ENCODE measurements at regions of chr11 and their contacts with region 1.

Region 1: DNA sequence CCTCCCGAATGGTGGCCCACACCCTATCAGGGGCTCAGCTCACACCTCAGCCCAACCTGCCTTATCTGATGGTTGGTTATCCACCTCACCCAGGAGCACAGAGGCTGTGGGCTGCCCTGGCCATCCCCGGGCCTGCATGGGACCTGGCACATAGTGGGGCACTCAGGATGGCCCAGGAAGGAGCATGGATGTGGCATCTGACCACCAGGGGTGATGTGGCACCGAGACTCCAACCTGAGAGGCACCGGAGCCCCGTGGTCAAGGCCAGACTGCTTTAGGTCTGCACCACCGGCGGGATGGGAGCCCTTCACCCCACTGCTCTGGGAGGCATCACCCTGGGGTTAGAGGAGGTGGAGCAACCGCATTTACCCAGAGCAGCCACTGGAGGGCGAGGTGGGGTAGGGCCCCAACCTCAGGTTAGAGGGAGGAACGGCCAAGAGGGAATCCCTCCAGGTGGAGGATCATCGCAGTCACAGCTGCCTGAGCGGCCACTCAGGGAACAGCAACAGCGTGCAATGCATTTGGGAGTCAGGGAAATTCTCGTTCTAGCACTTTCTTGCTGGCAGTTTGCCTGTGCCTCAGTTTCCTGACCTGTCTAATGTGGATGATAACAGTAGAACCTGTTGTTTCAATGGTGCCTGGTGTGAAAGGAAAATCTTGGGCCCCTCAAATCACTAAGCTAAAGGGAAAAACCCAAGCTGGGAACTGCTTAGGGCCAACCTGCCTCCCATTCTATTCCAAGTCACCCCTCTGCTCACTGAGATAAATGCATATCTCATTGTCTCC is 52.9 kb upstream of the CARS1 start:
- DNase-seq: peak; percentile 80 to 95 (median 92)
- ATAC-seq: peak; percentile 99
- H3K4me3 ChIP-seq: no peak overlapping the region
- H3K27ac ChIP-seq: no peak overlapping the region
- H3K4me1 ChIP-seq: peaks cover 2 to 10% of the 10 kb centered on the region in 2 experiments; a peak in 3 of 5 replicates
- H3K27me3 ChIP-seq: no peaks in the 10 kb centered on the region
- CTCF ChIP-seq: peak; percentile 90 to 97 (median 92)
- EP300 ChIP-seq: no peak
- POLR2A ChIP-seq: no peak
- RAD21 ChIP-seq: peak; percentile 75 to 90

Region 2: DNA sequence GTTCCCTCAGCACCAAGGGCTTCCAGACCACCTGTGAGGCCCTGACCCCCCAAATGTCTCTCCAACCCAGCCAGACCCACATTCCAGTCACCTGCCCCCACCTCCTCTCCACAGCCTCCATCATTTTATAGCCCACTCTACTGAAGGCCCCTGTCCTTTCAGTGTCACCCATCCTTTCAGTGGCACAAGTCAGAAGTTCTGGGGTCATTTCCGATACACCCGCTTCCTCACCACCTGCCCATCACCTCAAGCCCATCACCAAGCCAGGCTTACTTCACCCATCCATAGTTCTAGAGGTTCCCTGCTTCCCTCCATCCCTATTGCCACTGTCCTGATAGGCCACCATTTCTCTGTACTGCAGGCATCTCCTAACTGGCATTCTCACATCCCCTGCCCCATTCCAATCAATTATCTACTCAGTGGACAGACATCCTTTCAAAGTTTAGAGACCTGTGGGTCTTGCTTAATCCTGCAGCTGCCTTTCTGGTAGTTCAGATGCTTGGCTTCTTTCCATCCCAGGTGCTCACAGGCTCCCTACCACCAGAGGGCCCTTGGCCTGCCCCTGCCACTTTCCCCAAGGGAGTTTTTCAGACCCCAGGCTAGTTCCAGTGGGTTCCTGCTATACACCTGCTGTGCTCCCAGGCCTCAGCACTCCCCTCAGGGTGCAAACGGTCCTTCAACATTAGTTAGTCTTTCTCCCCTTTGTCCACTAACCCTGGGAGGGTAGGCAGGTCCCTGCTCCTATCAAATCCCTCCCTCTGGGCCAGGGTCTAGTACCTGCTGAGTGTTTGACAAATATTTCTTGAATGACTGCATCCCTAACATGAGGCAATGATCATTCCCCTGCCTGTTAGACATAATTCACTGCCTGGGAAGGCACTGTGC is 417.9 kb before region 1 on chr11:
- CTCF ChIA-PET with region 1: no interaction called
- POLR2A ChIA-PET with region 1: no interaction called
- in situ Hi-C with region 1: no loop called
- intact Hi-C with region 1: no loop called
- DNase-seq: peak in 1 of 4 experiments; percentile 34
- ATAC-seq: 0 out of 3 replicates have a peak, but pooled peaks have one; percentile 17
- H3K4me3 ChIP-seq: no peak overlapping the region
- H3K27ac ChIP-seq: no peak overlapping the region
- H3K4me1 ChIP-seq: peaks cover 5 to 11% of the 10 kb centered on the region in 2 experiments; a peak in 4 of 5 replicates
- H3K27me3 ChIP-seq: no peaks in the 10 kb centered on the region
- CTCF ChIP-seq: peak; percentile 28 to 47 (median 36); a peak in 4 of 6 replicates
- EP300 ChIP-seq: no peak
- POLR2A ChIP-seq: no peak
- RAD21 ChIP-seq: peak in 1 of 2 experiments; percentile 41; a peak in 2 of 4 replicates

Region 3: DNA sequence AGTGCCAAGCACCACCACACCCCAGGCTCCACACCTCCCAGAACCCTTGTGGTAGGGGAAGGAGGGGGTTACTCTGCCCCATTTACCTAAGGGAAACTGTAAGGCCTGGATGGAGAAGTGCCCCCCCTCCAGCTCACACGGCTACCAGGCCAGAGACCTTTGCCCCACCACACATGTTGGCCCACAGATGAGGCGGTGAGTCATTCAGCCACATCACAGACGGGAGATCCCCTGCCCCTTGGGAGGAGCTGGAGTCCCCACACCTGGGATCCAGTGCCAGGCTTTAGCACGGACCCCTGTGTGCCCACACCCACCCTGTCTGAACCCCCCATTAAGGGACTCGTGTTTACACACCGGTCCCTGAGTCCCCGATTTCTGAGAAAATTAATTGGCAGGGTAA is 249.5 kb before region 1 on chr11:
- CTCF ChIA-PET with region 1: no interaction called
- POLR2A ChIA-PET with region 1: no interaction called
- in situ Hi-C with region 1: no loop called
- intact Hi-C with region 1: no loop called
- DNase-seq: peak in 1 of 4 experiments; percentile 34
- ATAC-seq: no peak
- H3K4me3 ChIP-seq: no peak overlapping the region
- H3K27ac ChIP-seq: no peak overlapping the region
- H3K4me1 ChIP-seq: peaks cover 0 to 33% of the 10 kb centered on the region in 2 experiments; a peak in 2 of 5 replicates
- H3K27me3 ChIP-seq: peaks cover 0 to 26% of the 10 kb centered on the region in 2 experiments; a peak in 3 of 5 replicates
- CTCF ChIP-seq: no peak
- EP300 ChIP-seq: no peak
- POLR2A ChIP-seq: no peak
- RAD21 ChIP-seq: no peak

Region 4: DNA sequence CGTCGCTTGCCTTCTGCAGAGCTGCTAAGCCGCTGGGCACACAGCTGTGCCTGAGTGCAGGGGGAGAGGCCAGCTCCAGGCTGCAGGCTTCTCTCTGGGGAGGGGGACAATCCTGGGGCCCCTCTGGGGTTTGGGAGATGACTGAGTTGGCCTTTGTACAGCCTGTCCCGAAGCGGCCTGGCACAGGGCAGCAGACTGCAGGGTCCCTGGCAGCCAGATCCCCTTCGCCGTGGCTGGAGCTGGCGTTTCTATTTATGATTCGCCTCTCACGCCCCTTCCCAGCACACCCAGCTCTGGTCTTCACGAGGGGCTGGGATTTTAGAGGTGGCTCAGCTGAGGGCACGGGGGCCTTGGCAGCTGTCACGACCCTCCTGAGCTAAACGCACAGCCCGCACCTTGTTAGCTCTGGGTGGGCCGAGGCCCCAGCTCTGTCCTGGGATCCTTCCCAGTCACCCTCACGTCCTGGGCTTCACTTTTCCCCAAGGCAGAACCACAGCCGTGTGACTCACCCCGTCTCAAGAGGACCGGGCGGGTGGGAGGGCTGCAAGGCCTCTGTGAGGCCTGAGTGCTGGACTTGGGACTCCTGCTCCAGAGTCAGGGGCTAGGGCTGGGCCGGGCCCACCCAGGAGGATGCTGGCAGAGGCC is 36.6 kb after region 1 on chr11:
- CTCF ChIA-PET with region 1: no interaction called
- POLR2A ChIA-PET with region 1: no interaction called
- in situ Hi-C with region 1: no loop called
- intact Hi-C with region 1: no loop called
- DNase-seq: no peak
- ATAC-seq: no peak
- H3K4me3 ChIP-seq: no peak overlapping the region
- H3K27ac ChIP-seq: no peak overlapping the region
- H3K4me1 ChIP-seq: peaks cover 7 to 75% of the 10 kb centered on the region in 2 experiments; a peak in 3 of 5 replicates
- H3K27me3 ChIP-seq: no peaks in the 10 kb centered on the region
- CTCF ChIP-seq: no peak
- EP300 ChIP-seq: no peak
- POLR2A ChIP-seq: no peak
- RAD21 ChIP-seq: no peak

Region 5: GRCh38 chr11:3160252-3161031 is 50.3 kb after region 1 on chr11:
- CTCF ChIA-PET with region 1: no interaction called
- POLR2A ChIA-PET with region 1: no interaction called
- in situ Hi-C with region 1: no loop called
- intact Hi-C with region 1: loop called (anchors 10 kb)
- DNase-seq: no peak
- ATAC-seq: no peak
- H3K4me3 ChIP-seq: no peak overlapping the region
- H3K27ac ChIP-seq: no peak overlapping the region
- H3K4me1 ChIP-seq: peaks cover 20 to 78% of the 10 kb centered on the region in 2 experiments
- H3K27me3 ChIP-seq: no peaks in the 10 kb centered on the region
- CTCF ChIP-seq: no peak
- EP300 ChIP-seq: no peak
- POLR2A ChIP-seq: no peak
- RAD21 ChIP-seq: no peak

Measured in K562 (cell line).